ENCODE measurements at regions of chr16 and their contacts with region 1.

Region 1: GRCh38 chr16:8878521-8878911 is 3.6 kb upstream of the LITAFD start:
- DNase-seq: no peak
- H3K4me3 ChIP-seq: no peak overlapping the region
- H3K4me1 ChIP-seq: no peaks in the 10 kb centered on the region
- H3K27me3 ChIP-seq: no peaks in the 10 kb centered on the region

Region 2: GRCh38 chr16:8567750-8568617 is 310.5 kb before region 1 on chr16:
- in situ Hi-C with region 1: loop called (anchors 5 kb)
- DNase-seq: peak; percentile 89 to 91
- H3K4me3 ChIP-seq: no peak overlapping the region
- H3K4me1 ChIP-seq: peaks cover 17% of the 10 kb centered on the region
- H3K27me3 ChIP-seq: no peaks in the 10 kb centered on the region

Region 3: GRCh38 chr16:8655184-8655717 is 223.3 kb before region 1 on chr16:
- in situ Hi-C with region 1: loop called (anchors 5 kb)
- DNase-seq: peak; percentile 34 to 54
- H3K4me3 ChIP-seq: no peak overlapping the region
- H3K4me1 ChIP-seq: no peaks in the 10 kb centered on the region
- H3K27me3 ChIP-seq: no peaks in the 10 kb centered on the region; the same call in 1 of the 2 replicates

Region 4: GRCh38 chr16:8975039-8975438 is 96.5 kb after region 1 on chr16:
- in situ Hi-C with region 1: no loop called
- DNase-seq: no peak
- H3K4me3 ChIP-seq: no peak overlapping the region
- H3K4me1 ChIP-seq: peaks cover under 1% of the 10 kb centered on the region
- H3K27me3 ChIP-seq: no peaks in the 10 kb centered on the region